Endothelial cell of umbilical vein (primary cell): ENCODE measurements at regions of chr19 and their contacts with region 1.

Region 1: GRCh38 chr19:37931881-37932655 is 25.1 kb downstream of the SIPA1L3 start:
- DNase-seq: peak; percentile 52
- H3K4me3 ChIP-seq: no peak overlapping the region
- H3K27ac ChIP-seq: peak overlapping the region; percentile 32
- H3K4me1 ChIP-seq: peaks cover 13% of the 10 kb centered on the region
- H3K27me3 ChIP-seq: no peaks in the 10 kb centered on the region
- CTCF ChIP-seq: no peak
- POLR2A ChIP-seq: no peak

Region 2: DNA sequence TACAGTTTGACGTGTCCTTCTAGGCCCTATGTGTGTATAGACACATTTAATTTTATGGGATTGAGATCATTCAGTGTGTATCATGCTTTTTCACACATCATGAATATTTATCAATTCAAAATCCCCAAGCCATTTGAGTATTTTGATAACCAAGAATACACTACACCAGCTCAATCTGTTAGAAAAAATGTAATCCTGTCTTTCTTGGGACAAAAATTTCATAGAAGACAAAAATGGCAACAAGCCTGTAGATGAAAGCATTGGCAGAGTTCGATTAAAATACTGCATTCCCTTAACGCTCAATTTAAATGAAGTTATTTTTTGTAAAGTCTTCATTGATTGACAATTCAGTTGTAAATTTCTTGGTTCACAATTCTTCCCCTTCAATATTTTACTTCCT is 67.6 kb before region 1 on chr19:
- CTCF ChIA-PET with region 1: no interaction called
- POLR2A ChIA-PET with region 1: no interaction called
- dilution Hi-C with region 1: no loop called
- intact Hi-C with region 1: no loop called
- DNase-seq: no peak
- H3K4me3 ChIP-seq: no peak overlapping the region
- H3K27ac ChIP-seq: no peak overlapping the region
- H3K4me1 ChIP-seq: no peaks in the 10 kb centered on the region
- H3K27me3 ChIP-seq: no peaks in the 10 kb centered on the region
- CTCF ChIP-seq: no peak
- POLR2A ChIP-seq: no peak

Region 3: DNA sequence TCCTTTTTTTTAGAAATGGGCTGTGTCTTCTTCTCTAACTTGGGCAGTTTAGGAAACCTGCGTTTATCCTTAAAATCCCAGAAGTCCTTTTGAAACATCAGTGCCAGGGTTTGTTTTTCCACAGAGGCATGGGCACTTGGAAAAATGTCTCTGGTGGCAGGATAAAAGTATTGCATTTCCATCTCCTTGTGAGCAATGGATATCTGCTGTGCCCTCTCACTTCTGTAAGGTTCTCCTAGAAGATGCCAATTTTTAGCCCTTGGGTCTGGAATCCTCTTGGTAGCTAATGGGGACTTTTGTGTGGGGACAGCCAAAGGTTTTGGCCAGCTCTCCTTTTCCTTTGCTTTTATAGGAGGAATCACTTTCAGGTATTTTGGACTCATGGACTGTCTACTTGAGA is 46.7 kb before region 1 on chr19:
- CTCF ChIA-PET with region 1: no interaction called
- POLR2A ChIA-PET with region 1: no interaction called
- dilution Hi-C with region 1: no loop called
- intact Hi-C with region 1: no loop called
- DNase-seq: no peak
- H3K4me3 ChIP-seq: no peak overlapping the region
- H3K27ac ChIP-seq: no peak overlapping the region
- H3K4me1 ChIP-seq: no peaks in the 10 kb centered on the region
- H3K27me3 ChIP-seq: peaks cover 7 to 15% of the 10 kb centered on the region in 2 experiments
- CTCF ChIP-seq: no peak
- POLR2A ChIP-seq: no peak

Region 4: DNA sequence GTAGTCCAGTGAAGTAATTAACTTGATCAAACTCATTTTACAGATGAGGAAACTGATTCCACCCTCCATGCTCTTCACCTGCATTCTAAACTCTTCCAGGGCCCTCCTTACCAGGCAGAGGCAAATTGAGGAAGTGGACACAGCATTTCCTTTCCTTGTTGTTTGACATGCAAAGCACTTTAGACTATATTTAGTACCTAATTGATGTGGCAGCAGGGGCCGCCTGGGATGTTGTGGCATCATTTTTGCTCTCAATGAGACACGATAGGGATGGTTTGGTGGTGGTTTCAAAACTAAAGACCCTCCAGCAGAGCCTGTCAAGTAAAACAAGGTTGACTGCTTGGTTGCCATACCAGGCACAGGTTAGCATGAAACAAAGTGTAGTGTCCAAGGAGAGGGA is 17.2 kb before region 1 on chr19:
- CTCF ChIA-PET with region 1: interaction called, 11 read pairs
- POLR2A ChIA-PET with region 1: interaction called, 3 read pairs
- dilution Hi-C with region 1: no loop called
- intact Hi-C with region 1: no loop called
- DNase-seq: no peak
- H3K4me3 ChIP-seq: no peak overlapping the region
- H3K27ac ChIP-seq: no peak overlapping the region
- H3K4me1 ChIP-seq: peaks cover 3% of the 10 kb centered on the region
- H3K27me3 ChIP-seq: no peaks in the 10 kb centered on the region
- CTCF ChIP-seq: no peak
- POLR2A ChIP-seq: no peak

Region 5: GRCh38 chr19:37979547-37980082 is 47.5 kb after region 1 on chr19:
- CTCF ChIA-PET with region 1: interaction called, 3 read pairs
- POLR2A ChIA-PET with region 1: no interaction called
- dilution Hi-C with region 1: no loop called
- intact Hi-C with region 1: loop called (anchors 5 kb)
- DNase-seq: no peak
- H3K4me3 ChIP-seq: no peak overlapping the region
- H3K27ac ChIP-seq: no peak overlapping the region
- H3K4me1 ChIP-seq: peaks cover 5% of the 10 kb centered on the region
- H3K27me3 ChIP-seq: no peaks in the 10 kb centered on the region
- CTCF ChIP-seq: no peak
- POLR2A ChIP-seq: no peak

Region 6: GRCh38 chr19:38245826-38246498 is 313.9 kb after region 1 on chr19:
- CTCF ChIA-PET with region 1: no interaction called
- POLR2A ChIA-PET with region 1: no interaction called
- dilution Hi-C with region 1: no loop called
- intact Hi-C with region 1: no loop called
- DNase-seq: no peak
- H3K4me3 ChIP-seq: no peak overlapping the region
- H3K27ac ChIP-seq: no peak overlapping the region
- H3K4me1 ChIP-seq: no peaks in the 10 kb centered on the region
- H3K27me3 ChIP-seq: no peaks in the 10 kb centered on the region
- CTCF ChIP-seq: no peak
- POLR2A ChIP-seq: no peak